Endothelial cell of umbilical vein (primary cell): ENCODE measurements at regions of chr1 and their contacts with region 1.

Region 1: DNA sequence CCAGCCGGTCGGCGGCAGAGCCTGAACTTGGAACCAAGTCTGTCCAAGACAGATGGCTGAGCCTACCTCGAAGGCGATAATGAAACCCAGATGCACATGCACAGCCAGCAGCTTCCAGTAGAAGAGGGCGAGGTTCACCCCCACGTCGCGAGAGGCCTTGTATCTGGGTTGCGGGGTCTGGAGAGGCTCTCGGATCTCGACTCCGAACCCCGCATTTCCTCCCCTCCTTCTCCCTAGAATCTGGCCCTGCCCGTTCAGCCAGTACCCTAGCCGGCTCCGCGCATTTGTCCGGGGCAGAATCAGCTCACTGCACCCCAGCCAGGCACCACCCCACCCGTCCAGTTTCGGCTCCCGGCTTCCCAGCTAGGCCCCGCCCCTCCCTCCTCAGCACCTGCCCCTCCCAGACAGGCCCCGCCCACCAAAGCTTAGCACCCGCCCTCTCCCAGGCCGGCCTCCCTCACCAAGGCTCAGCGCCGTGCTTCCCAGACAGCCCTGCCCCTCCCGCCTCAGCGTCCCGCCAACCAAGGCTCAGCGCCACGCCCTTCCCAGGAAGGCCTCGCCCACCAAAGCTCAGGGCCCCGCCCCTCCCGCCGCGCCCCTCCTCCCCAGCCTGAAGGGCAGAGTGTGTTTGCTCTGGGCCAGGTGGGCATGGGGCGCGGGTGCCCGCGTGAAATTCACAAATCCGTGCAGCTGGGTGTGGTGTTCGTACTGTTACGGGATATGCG is 4.8 kb upstream of the ARHGEF19 start:
- DNase-seq: peak; percentile 96
- H3K4me3 ChIP-seq: peak overlapping the region; percentile 39 to 58 (median 42)
- H3K27ac ChIP-seq: no peak overlapping the region
- H3K4me1 ChIP-seq: peaks cover 8% of the 10 kb centered on the region
- H3K27me3 ChIP-seq: peaks cover 0 to 2% of the 10 kb centered on the region in 2 experiments
- CTCF ChIP-seq: no peak
- POLR2A ChIP-seq: no peak

Region 2: GRCh38 chr1:15994590-15995351 is 222.5 kb before region 1 on chr1:
- CTCF ChIA-PET with region 1: no interaction called
- POLR2A ChIA-PET with region 1: no interaction called
- dilution Hi-C with region 1: no loop called
- intact Hi-C with region 1: no loop called
- DNase-seq: peak; percentile 71
- H3K4me3 ChIP-seq: no peak overlapping the region
- H3K27ac ChIP-seq: no peak overlapping the region
- H3K4me1 ChIP-seq: no peaks in the 10 kb centered on the region
- H3K27me3 ChIP-seq: peaks cover 0 to 2% of the 10 kb centered on the region in 2 experiments
- CTCF ChIP-seq: peak; percentile 88 to 96
- POLR2A ChIP-seq: no peak

Region 3: DNA sequence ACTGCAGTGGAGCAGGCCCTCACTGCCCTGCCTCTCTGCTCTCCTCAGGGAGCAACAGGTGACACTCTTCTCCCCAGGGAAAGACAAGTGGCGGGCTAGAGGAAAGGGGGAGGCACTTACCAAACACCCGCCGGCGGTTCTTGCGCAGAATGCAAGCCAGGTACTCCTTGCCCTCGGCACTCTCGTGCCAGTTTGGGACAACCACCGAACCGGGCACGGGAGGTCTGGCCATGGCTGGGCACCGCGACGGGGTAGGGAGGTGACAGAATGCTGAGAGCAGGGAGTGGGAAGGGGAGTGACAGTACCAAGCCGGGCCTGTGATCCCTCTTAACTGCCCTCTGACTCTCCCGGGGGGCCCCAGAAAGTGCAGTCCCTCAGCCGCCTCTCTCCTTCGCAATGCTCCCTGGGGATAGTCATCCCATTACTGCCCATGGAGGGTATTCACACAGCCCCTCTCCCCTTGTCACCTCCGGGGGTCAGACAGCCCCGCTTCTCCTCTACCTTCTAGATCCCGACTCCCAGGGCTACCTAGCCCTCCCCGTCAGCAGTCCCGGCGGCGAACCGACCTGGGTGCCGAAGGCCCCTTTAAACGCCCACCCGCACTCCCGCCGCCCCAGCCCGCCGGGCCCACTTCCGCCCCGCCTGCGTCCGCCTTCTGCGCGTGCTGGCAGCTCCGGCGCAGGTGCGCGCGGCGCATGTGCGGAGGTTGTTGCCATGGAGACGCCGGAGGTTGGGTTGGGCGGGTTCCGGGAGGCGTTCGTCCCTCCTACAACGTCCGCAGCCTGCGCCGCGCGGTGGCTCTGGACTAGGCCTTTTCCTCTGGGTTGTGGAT is 19.5 kb after region 1 on chr1 and contains the start of gene CPLANE2:
- CTCF ChIA-PET with region 1: interaction called, 8 read pairs
- POLR2A ChIA-PET with region 1: no interaction called
- dilution Hi-C with region 1: no loop called
- intact Hi-C with region 1: loop called (anchors 1 kb)
- DNase-seq: peak; percentile 89
- H3K4me3 ChIP-seq: peak within 1 kb of the TSS; percentile 2 to 53 (median 47)
- H3K27ac ChIP-seq: peak within 1 kb of the TSS; percentile 63
- H3K4me1 ChIP-seq: peaks cover 15% of the 10 kb centered on the region
- H3K27me3 ChIP-seq: no peaks in the 10 kb centered on the region
- CTCF ChIP-seq: no peak
- POLR2A ChIP-seq: peak; percentile 73
- total RNA-seq, gene CPLANE2: 3.7 and 3.9 TPM in 2 replicates